ENCODE measurements at regions of chr1 and their contacts with region 1.

Region 1: DNA sequence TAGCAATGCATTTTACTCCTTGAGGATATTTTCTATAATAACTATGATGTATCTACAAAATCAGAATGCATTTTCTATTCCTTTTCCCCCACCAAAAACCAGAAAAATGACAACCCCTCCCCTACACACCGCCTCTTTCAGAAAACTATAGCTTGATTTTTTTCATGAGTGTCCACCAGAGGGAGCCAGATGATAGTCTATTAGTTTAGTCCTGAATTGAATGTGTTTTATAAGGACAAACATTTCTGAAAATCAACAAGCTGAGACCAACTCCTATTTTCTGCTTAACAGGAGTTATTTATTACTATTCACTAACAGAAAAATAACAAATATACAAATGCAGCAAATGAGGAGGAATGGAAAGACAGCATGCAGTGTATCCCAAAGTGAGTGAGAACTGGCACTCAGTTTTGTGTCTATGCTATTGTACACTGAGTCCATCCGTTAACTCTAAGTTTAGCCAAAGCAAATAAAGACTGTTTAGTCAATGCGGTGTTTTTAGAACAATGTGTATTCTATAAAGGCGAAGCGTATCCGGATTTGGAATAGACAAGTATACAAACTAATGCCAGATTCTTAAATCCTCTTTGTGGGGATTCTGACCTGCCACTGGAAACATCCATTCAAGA is 182.6 kb downstream of the VAV3 start:
- DNase-seq: peak; percentile 43
- ATAC-seq: peak; percentile 52; the same call in 1 of the 3 replicates
- H3K4me3 ChIP-seq: no peak overlapping the region
- H3K27ac ChIP-seq: no peak overlapping the region
- H3K4me1 ChIP-seq: no peaks in the 10 kb centered on the region
- H3K27me3 ChIP-seq: no peaks in the 10 kb centered on the region; a peak in 1 of 5 replicates
- CTCF ChIP-seq: peak; percentile 69
- EP300 ChIP-seq: no peak
- POLR2A ChIP-seq: no peak
- RAD21 ChIP-seq: peak; percentile 48; the same call in 1 of the 2 replicates

Region 2: GRCh38 chr1:107795994-107796393 is 13.7 kb after region 1 on chr1:
- CTCF ChIA-PET with region 1: no interaction called
- POLR2A ChIA-PET with region 1: no interaction called
- in situ Hi-C with region 1: no loop called
- intact Hi-C with region 1: no loop called
- DNase-seq: no peak
- ATAC-seq: no peak
- H3K4me3 ChIP-seq: no peak overlapping the region
- H3K27ac ChIP-seq: no peak overlapping the region
- H3K4me1 ChIP-seq: no peaks in the 10 kb centered on the region
- H3K27me3 ChIP-seq: no peaks in the 10 kb centered on the region
- CTCF ChIP-seq: no peak
- EP300 ChIP-seq: no peak
- POLR2A ChIP-seq: no peak
- RAD21 ChIP-seq: no peak

Region 3: DNA sequence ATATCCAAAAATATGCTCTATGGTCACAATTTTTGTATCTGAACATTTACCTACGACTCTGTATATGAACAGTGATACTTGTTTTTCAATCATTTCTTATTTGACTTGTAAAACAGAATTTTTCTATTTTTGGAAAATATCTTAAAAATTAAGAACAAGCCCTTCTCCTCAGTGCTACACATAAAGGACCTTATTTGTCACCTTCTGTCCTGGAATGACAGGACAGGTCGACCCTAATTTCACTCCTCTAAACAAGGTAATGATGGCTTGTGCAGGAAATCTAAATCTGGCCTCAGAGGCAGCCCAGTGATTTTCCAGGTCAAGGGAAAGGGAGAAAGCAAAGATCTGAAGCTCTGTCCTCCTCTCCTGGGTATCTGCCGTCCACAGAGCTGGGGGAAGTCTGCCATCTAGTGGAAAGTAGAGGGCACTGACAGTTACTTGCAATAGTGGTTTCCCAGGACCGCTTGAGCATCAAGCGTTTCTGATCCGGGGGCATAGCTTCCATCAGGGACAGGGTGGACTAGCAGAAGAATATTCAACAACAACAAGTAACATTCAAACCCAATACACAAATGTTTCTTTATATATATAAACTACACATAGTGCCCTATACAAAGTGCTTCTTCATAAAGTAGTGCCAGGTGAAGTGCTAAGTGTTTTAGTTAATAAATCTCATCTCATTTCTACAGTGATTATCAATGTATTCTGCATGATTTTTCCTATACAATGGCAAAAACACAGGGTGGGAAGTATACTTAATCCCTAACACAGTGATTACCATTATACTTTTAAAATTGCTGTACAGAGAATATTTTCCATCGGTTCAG is 343.2 kb after region 1 on chr1:
- CTCF ChIA-PET with region 1: interaction called, 82 read pairs
- POLR2A ChIA-PET with region 1: no interaction called
- in situ Hi-C with region 1: loop called (anchors 5 kb)
- intact Hi-C with region 1: loop called (anchors 1 kb)
- DNase-seq: peak; percentile 61
- ATAC-seq: peak; percentile 93
- H3K4me3 ChIP-seq: no peak overlapping the region
- H3K27ac ChIP-seq: no peak overlapping the region
- H3K4me1 ChIP-seq: no peaks in the 10 kb centered on the region
- H3K27me3 ChIP-seq: peaks cover 0 to 2% of the 10 kb centered on the region in 2 experiments; a peak in 1 of 5 replicates
- CTCF ChIP-seq: peak; percentile 93
- EP300 ChIP-seq: no peak
- POLR2A ChIP-seq: no peak
- RAD21 ChIP-seq: peak; percentile 89

Region 4: GRCh38 chr1:108559215-108560186 is 777.2 kb after region 1 on chr1 and contains the start of gene EEIG2:
- CTCF ChIA-PET with region 1: no interaction called
- POLR2A ChIA-PET with region 1: no interaction called
- in situ Hi-C with region 1: loop called (anchors 25 kb)
- intact Hi-C with region 1: no loop called
- DNase-seq: peak; percentile 48
- ATAC-seq: peak; percentile 89
- H3K4me3 ChIP-seq: peak within 1 kb of the TSS; percentile 54 to 77 (median 65)
- H3K27ac ChIP-seq: no peak within 1 kb of the TSS
- H3K4me1 ChIP-seq: peaks cover 21% of the 10 kb centered on the region
- H3K27me3 ChIP-seq: peaks cover 0 to 3% of the 10 kb centered on the region in 2 experiments; a peak in 1 of 5 replicates
- CTCF ChIP-seq: peak; percentile 69
- EP300 ChIP-seq: no peak
- POLR2A ChIP-seq: no peak
- RAD21 ChIP-seq: no peak
- total RNA-seq, gene EEIG2: 3.2 and 5.7 TPM in 2 replicates

Measured in HepG2 (cell line).